ENCODE measurements at regions of chr6 and their contacts with region 1.

Region 1: DNA sequence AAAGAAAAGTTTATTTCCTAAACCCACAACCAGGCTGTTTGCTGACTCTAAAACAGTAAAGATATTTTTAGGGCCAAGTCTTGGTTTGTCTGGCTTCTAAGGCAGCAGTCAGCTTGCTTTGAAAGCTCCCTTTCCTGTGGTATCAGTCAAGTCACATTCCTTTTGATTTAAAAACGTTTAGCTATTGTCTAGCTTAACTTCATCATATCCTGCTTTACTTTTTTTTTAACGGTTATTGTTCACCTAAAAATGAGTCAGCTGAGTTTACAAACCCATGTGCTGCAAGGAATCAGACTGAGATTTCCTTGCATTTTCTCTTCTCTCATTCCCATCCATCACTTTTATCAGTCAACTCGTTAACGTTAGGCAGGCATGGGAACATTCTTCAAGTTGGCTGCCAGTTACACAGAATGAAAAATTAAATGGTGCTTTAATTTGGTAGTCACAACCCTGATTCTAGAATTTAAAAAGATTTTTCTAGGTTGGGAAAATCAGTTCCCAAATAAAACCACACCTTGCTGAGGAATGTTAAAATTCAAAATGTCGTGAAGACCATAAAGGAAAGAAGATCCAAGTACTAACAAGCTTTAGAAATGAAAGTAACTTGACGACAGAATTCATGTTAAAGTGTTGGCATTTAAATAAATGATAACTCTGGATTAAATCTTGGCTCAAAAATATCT is 45.9 kb downstream of the ELOVL5 start:
- DNase-seq: peak; percentile 92
- ATAC-seq: peak; percentile 79
- H3K4me3 ChIP-seq: peak overlapping the region; percentile 48
- H3K27ac ChIP-seq: peak overlapping the region; percentile 98
- H3K4me1 ChIP-seq: peaks cover 55% of the 10 kb centered on the region
- H3K27me3 ChIP-seq: no peaks in the 10 kb centered on the region
- CTCF ChIP-seq: no peak

Region 2: GRCh38 chr6:53313784-53314400 is 11.1 kb after region 1 on chr6:
- CTCF ChIA-PET with region 1: no interaction called
- POLR2A ChIA-PET with region 1: no interaction called
- intact Hi-C with region 1: no loop called
- DNase-seq: no peak
- ATAC-seq: no peak
- H3K4me3 ChIP-seq: no peak overlapping the region
- H3K27ac ChIP-seq: no peak overlapping the region
- H3K4me1 ChIP-seq: peaks cover 28% of the 10 kb centered on the region
- H3K27me3 ChIP-seq: no peaks in the 10 kb centered on the region
- CTCF ChIP-seq: no peak

Region 3: GRCh38 chr6:53326372-53327016 is 23.7 kb after region 1 on chr6:
- CTCF ChIA-PET with region 1: interaction called, 9 read pairs
- POLR2A ChIA-PET with region 1: no interaction called
- intact Hi-C with region 1: loop called (anchors 2 kb)
- DNase-seq: peak; percentile 98
- ATAC-seq: peak; percentile 87
- H3K4me3 ChIP-seq: peak overlapping the region; percentile 42
- H3K27ac ChIP-seq: peak overlapping the region; percentile 95
- H3K4me1 ChIP-seq: peaks cover 55% of the 10 kb centered on the region
- H3K27me3 ChIP-seq: no peaks in the 10 kb centered on the region
- CTCF ChIP-seq: no peak

Region 4: DNA sequence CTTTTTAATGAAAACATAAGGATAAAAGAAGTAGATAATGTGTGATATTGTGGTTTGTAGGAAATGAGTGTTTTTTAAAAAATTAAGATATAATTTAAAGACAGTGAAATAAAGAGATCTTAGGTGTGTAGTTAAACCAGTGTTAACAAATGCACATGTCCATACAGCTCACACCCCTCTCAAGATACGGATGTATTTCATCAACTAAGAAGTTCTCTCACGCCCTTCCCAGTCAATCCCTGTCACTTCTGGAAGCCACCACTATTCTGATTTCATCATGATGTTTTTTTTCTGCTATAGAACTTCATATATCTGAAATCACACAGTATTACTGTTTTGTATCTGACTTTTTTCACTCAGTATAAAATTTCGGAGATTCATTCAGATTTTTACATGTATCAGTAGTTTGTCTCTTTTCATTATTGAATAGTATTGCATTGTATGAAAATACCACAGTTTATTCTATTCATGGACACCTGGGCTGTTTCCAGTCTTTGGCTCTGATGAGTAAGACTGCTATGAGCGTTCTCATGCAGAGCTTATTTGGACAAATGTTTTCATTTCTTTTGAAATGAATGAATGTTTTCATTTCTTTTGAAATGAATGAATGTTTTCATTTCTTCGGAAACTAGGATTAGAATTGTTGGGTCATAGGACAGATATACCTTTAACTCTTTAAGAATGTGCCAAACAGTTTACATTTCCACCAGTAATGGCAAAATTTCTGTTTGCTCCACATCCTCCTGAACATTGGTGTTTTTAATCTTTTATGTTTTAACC is 95.6 kb after region 1 on chr6:
- CTCF ChIA-PET with region 1: no interaction called
- POLR2A ChIA-PET with region 1: no interaction called
- intact Hi-C with region 1: loop called (anchors 1 kb)
- DNase-seq: peak; percentile 46
- ATAC-seq: peak; percentile 56
- H3K4me3 ChIP-seq: peak overlapping the region; percentile 46
- H3K27ac ChIP-seq: peak overlapping the region; percentile 80
- H3K4me1 ChIP-seq: peaks cover 28% of the 10 kb centered on the region
- H3K27me3 ChIP-seq: no peaks in the 10 kb centered on the region
- CTCF ChIP-seq: no peak

Region 5: DNA sequence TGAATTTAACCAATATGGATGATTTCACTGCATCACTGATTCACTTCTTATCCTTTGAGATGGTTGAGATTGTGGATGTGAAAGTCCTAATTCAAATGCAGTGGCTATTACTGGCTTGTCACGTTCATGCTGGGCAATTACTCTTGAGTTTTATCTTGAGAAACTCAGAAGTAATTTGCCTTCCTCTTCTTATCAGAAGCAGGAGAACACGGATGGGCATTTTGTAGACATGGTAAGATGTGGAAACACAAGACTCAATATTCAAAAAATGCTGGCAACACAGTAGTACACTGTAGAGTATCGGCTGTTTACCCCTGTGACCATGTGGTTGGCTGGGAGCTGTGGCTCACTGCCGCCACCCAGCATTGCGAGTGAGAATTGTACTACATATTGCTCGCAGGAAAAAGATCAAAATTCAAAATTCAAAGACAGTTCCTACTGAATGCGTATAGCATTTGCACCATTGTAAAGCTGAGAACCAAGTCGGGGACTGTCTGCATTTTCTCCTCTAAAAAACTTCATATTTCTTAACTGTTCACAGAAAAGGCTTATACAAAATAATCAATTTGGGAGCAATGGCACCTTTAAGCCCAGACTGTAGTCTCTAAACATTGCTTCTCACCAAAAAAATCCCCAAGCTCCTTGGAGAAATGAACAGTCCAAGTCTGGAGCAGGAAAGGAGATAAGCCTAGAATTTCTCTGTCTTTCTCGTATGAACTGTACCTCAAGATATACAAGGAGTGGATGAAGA is 107.9 kb after region 1 on chr6:
- CTCF ChIA-PET with region 1: no interaction called
- POLR2A ChIA-PET with region 1: no interaction called
- intact Hi-C with region 1: loop called (anchors 2 kb)
- DNase-seq: peak; percentile 71
- ATAC-seq: peak; percentile 94
- H3K4me3 ChIP-seq: no peak overlapping the region
- H3K27ac ChIP-seq: no peak overlapping the region
- H3K4me1 ChIP-seq: peaks cover 3% of the 10 kb centered on the region; the same call in 1 of the 2 replicates
- H3K27me3 ChIP-seq: no peaks in the 10 kb centered on the region
- CTCF ChIP-seq: peak; percentile 93

Region 6: GRCh38 chr6:54206510-54206909 is 903.7 kb after region 1 on chr6:
- CTCF ChIA-PET with region 1: no interaction called
- POLR2A ChIA-PET with region 1: no interaction called
- intact Hi-C with region 1: no loop called
- DNase-seq: peak; percentile 31
- ATAC-seq: no peak
- H3K4me3 ChIP-seq: no peak overlapping the region
- H3K27ac ChIP-seq: no peak overlapping the region
- H3K4me1 ChIP-seq: no peaks in the 10 kb centered on the region
- H3K27me3 ChIP-seq: no peaks in the 10 kb centered on the region
- CTCF ChIP-seq: no peak